OCI-LY7 (cell line): ENCODE measurements at regions of chr2 and their contacts with region 1.

Region 1: GRCh38 chr2:30287857-30288513 is 56.7 kb downstream of the LBH start:
- DNase-seq: peak; percentile 70
- H3K4me3 ChIP-seq: peak overlapping the region; percentile 45
- H3K27ac ChIP-seq: peak overlapping the region; percentile 76
- H3K4me1 ChIP-seq: peaks cover 33% of the 10 kb centered on the region
- CTCF ChIP-seq: no peak

Region 2: DNA sequence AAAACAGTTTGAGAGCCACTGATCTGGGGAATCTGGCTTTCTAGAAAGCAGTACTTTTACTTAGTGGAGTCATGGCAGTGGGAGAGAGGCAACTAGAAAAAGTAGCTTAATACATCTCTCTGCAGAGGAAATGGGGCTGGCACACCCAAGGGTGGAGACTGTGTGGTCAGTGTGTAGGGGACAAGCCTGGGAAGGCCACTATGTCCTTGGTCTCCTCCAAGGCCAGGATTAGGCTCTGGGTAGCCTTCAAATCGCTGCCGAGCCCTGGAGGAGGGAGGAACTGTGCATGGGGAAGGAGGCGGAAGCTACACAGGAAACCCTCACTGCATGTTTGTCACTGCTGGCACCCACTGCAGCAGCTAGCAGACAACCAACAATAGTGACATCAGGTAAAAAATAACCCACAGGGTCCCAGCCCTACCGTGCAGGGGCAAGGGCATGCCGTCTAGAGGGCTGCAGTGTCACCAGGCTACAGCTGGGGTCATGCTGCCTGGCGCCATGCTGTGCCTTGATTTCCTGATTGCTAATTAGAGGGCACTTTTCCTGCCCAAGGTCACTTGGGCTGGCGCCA is 21.8 kb before region 1 on chr2:
- CTCF ChIA-PET with region 1: no interaction called
- POLR2A ChIA-PET with region 1: interaction called, 30 read pairs
- intact Hi-C with region 1: no loop called
- DNase-seq: peak; percentile 67
- H3K4me3 ChIP-seq: no peak overlapping the region
- H3K27ac ChIP-seq: no peak overlapping the region
- H3K4me1 ChIP-seq: peaks cover 22% of the 10 kb centered on the region
- CTCF ChIP-seq: no peak

Region 3: GRCh38 chr2:30300456-30301221 is 12.7 kb after region 1 on chr2:
- CTCF ChIA-PET with region 1: interaction called, 4 read pairs
- POLR2A ChIA-PET with region 1: interaction called, 12 read pairs
- intact Hi-C with region 1: no loop called
- DNase-seq: no peak
- H3K4me3 ChIP-seq: no peak overlapping the region
- H3K27ac ChIP-seq: no peak overlapping the region
- H3K4me1 ChIP-seq: peaks cover 7% of the 10 kb centered on the region
- CTCF ChIP-seq: no peak